ENCODE measurements at regions of chr3 and their contacts with region 1.

Region 1: GRCh38 chr3:37974121-37975083 is 16.2 kb upstream of the VILL start:
- DNase-seq: peak; percentile 62 to 73 (median 69)
- H3K4me3 ChIP-seq: no peak overlapping the region
- H3K4me3 Mint-ChIP-seq: no peak overlapping the region
- H3K27ac ChIP-seq: no peak overlapping the region
- H3K27ac Mint-ChIP-seq: peak overlapping the region in 3 of 7 donors; percentile 59 to 84 (median 81)
- H3K4me1 ChIP-seq: no peaks in the 10 kb centered on the region
- H3K4me1 Mint-ChIP-seq: peaks cover 3 to 5% (median 4%) of the 10 kb centered on the region in 4 donors
- H3K27me3 ChIP-seq: no peaks in the 10 kb centered on the region
- H3K27me3 Mint-ChIP-seq: peaks cover 0 to 2% of the 10 kb centered on the region in 2 donors

Region 2: DNA sequence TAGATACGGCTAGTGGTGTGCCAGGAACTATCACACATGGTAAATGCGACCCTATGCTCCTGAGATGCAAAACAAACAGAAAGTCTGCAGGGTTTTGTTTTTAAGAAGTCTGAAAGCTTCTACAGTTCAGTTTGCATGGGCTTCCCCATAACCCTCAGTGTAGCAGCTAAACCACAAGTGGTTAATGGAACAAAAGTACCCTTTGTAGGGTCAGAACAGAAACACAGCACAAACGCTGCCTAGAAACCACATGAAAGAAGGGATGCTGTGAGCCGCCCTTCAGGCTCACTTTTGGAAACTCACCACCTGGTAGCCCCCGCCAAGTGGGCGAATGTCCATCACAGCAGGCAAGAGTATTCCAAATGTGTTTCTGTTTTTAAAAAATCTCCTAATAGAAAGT is 66.5 kb before region 1 on chr3:
- CTCF ChIA-PET with region 1: no interaction called
- POLR2A ChIA-PET with region 1: no interaction called
- intact Hi-C with region 1: no loop called
- DNase-seq: no peak
- H3K4me3 ChIP-seq: no peak overlapping the region
- H3K4me3 Mint-ChIP-seq: peak overlapping the region in 5 of 8 donors; percentile 9 to 55 (median 17)
- H3K27ac ChIP-seq: no peak overlapping the region
- H3K27ac Mint-ChIP-seq: no peak overlapping the region
- H3K4me1 ChIP-seq: peaks cover 19% of the 10 kb centered on the region
- H3K4me1 Mint-ChIP-seq: peaks cover 6 to 25% (median 17%) of the 10 kb centered on the region in 4 donors
- H3K27me3 ChIP-seq: no peaks in the 10 kb centered on the region
- H3K27me3 Mint-ChIP-seq: peaks cover 6 to 7% of the 10 kb centered on the region in 2 donors

Region 3: DNA sequence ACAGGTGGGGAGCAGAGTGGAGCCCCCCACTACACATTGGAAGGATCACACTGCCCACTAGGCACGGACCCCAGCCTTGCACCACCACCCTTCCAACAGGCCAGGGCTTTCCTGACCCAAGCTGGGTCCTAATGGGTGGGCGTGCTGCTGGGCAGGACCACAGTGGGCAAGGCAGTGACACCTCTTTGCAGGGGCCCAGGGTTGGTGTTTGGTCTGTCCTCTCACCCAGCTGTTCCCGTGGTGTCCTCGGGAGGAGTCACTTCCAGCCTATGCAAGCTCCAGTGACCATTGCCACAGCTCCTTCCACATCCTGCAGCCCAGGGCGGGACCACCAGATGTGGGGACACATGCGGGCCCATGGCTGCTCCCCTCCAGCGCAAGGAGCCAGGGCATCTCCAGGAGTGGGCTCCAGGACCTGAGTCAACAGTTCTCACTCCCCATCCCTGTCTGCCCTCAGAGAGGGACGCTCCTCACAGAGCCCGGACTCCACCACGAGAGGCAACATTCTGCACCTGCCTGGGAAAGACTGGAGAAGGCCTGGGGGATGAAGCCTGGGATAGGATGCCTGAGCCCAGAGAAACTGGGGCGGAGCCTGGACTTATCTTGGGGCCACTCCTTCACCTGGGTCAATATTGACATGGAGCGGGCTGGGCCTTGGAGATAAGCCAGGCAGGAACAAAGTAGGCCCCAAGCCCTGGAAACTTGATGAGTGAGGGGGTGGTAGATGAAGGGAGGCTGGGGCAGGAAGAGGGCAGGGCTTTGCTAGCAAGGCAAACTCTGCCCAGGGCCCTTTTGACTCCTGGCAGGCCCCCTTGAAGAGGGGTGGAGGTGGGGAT is 12.3 kb after region 1 on chr3:
- CTCF ChIA-PET with region 1: interaction called, 35 read pairs
- POLR2A ChIA-PET with region 1: no interaction called
- intact Hi-C with region 1: no loop called
- DNase-seq: peak in 1 of 5 donors; percentile 29
- H3K4me3 ChIP-seq: no peak overlapping the region
- H3K4me3 Mint-ChIP-seq: no peak overlapping the region
- H3K27ac ChIP-seq: no peak overlapping the region
- H3K27ac Mint-ChIP-seq: no peak overlapping the region
- H3K4me1 ChIP-seq: peaks cover 4% of the 10 kb centered on the region
- H3K4me1 Mint-ChIP-seq: peaks cover 0 to 13% (median 8%) of the 10 kb centered on the region in 4 donors
- H3K27me3 ChIP-seq: no peaks in the 10 kb centered on the region
- H3K27me3 Mint-ChIP-seq: no peaks in the 10 kb centered on the region

Region 4: DNA sequence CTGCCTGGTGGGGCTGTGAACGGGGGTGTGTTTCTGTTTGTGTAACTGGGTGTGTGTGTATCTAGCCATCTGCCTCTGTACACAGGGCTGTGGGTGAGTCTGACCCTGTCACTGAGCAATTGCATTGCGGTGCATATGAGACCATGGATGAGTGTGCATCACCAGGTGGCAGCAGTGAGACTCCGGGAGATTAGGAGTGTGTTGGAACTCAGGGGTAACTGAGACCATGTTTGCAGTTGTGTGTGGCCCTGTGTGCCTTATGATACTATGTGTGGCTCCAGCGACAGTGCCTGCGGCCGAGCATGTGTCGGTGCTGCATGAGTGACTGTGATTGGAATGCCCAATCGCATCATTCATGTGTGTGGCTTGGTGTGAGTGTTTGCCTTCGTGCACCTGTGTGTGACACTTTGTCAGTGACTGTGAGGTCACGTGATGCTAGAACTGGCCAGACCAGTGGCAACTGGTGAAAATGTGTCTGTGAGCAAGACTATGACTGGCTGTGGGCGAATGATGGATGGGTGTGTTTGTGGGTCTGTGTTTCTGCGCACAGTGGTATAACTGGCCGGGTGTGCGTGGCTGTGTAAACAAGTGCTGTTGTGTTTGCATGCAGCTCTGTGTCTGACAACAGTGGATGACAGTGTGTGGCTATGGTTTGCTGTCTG is 30.1 kb after region 1 on chr3:
- CTCF ChIA-PET with region 1: interaction called, 146 read pairs
- POLR2A ChIA-PET with region 1: interaction called, 12 read pairs
- intact Hi-C with region 1: loop called (anchors 1 kb)
- DNase-seq: peak; percentile 41 to 50 (median 48)
- H3K4me3 ChIP-seq: no peak overlapping the region
- H3K4me3 Mint-ChIP-seq: peak overlapping the region in 1 of 8 donors; percentile 52
- H3K27ac ChIP-seq: no peak overlapping the region
- H3K27ac Mint-ChIP-seq: peak overlapping the region; percentile 41 to 92 (median 85)
- H3K4me1 ChIP-seq: peaks cover 6% of the 10 kb centered on the region
- H3K4me1 Mint-ChIP-seq: peaks cover 10 to 34% (median 23%) of the 10 kb centered on the region in 4 donors
- H3K27me3 ChIP-seq: no peaks in the 10 kb centered on the region
- H3K27me3 Mint-ChIP-seq: no peaks in the 10 kb centered on the region

Region 5: DNA sequence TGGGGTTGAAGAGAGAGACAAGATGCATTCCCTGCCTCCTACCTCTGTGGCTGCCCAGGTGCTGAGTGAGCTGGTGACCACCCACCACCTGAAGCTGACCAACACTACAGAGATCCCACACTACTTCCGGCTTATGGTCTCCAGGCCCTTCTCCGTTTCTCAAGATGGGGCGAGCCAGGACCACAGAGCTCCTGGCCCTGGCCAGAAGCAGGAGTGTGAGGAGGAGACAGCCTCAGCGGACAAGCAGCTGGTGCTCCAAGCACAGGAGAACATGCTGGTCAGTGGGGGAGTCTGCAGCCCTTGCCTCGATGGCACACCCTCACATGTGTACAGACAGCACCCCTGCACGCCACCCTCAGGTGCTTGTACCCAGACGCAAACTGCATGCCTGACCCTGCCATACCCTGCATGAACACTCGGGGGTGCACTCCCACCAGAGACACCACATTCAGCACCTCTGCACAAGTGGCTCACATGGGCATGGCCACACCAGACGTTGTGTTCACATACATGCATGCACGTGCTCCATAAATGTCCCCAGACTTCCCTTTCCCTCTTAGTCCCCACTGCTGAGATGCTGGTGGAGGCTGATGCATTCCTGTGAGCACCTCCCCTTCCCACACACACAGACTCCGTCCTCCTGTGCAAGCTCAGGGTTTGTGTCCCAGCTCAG is 143.5 kb after region 1 on chr3:
- CTCF ChIA-PET with region 1: interaction called, 11 read pairs
- POLR2A ChIA-PET with region 1: no interaction called
- intact Hi-C with region 1: no loop called
- DNase-seq: peak; percentile 66 to 74 (median 70)
- H3K4me3 ChIP-seq: no peak overlapping the region
- H3K4me3 Mint-ChIP-seq: no peak overlapping the region
- H3K27ac ChIP-seq: no peak overlapping the region
- H3K27ac Mint-ChIP-seq: peak overlapping the region in 4 of 7 donors; percentile 25 to 86 (median 77)
- H3K4me1 ChIP-seq: no peaks in the 10 kb centered on the region
- H3K4me1 Mint-ChIP-seq: peaks cover 2 to 15% (median 6%) of the 10 kb centered on the region in 4 donors
- H3K27me3 ChIP-seq: no peaks in the 10 kb centered on the region
- H3K27me3 Mint-ChIP-seq: no peaks in the 10 kb centered on the region

Region 6: GRCh38 chr3:38346587-38347410 is 372.4 kb after region 1 on chr3 and contains the start of gene XYLB:
- CTCF ChIA-PET with region 1: interaction called, 10 read pairs
- POLR2A ChIA-PET with region 1: no interaction called
- intact Hi-C with region 1: loop called (anchors 1 kb)
- DNase-seq: peak; percentile 54 to 75 (median 72)
- H3K4me3 ChIP-seq: peak within 1 kb of the TSS; percentile 11 to 57
- H3K4me3 Mint-ChIP-seq: peak within 1 kb of the TSS; percentile 80 to 89 (median 82)
- H3K27ac ChIP-seq: peak within 1 kb of the TSS; percentile 28
- H3K27ac Mint-ChIP-seq: peak within 1 kb of the TSS in 2 of 7 donors; percentile 31 to 62
- H3K4me1 ChIP-seq: peaks cover 17% of the 10 kb centered on the region
- H3K4me1 Mint-ChIP-seq: peaks cover 0 to 4% (median 3%) of the 10 kb centered on the region in 4 donors
- H3K27me3 ChIP-seq: no peaks in the 10 kb centered on the region
- H3K27me3 Mint-ChIP-seq: no peaks in the 10 kb centered on the region
- total RNA-seq, gene XYLB: 0.47 to 0.61 TPM

Region 7: GRCh38 chr3:38651154-38651789 is 676.9 kb after region 1 on chr3:
- CTCF ChIA-PET with region 1: no interaction called
- POLR2A ChIA-PET with region 1: no interaction called
- intact Hi-C with region 1: loop called (anchors 1 kb)
- DNase-seq: peak in 4 of 5 donors; percentile 64 to 72 (median 70)
- H3K4me3 ChIP-seq: no peak overlapping the region
- H3K4me3 Mint-ChIP-seq: peak overlapping the region in 4 of 8 donors; percentile 7 to 73 (median 53)
- H3K27ac ChIP-seq: no peak overlapping the region
- H3K27ac Mint-ChIP-seq: peak overlapping the region in 2 of 7 donors; percentile 49 to 76
- H3K4me1 ChIP-seq: peaks cover 22% of the 10 kb centered on the region
- H3K4me1 Mint-ChIP-seq: peaks cover 6 to 10% (median 8%) of the 10 kb centered on the region in 4 donors
- H3K27me3 ChIP-seq: peaks cover 10% of the 10 kb centered on the region
- H3K27me3 Mint-ChIP-seq: peaks cover 8 to 26% of the 10 kb centered on the region in 2 donors

Measured in CD4-positive, alpha-beta memory T cell (primary cell).